ENCODE measurements at regions of chr11 and their contacts with region 1.

Region 1: DNA sequence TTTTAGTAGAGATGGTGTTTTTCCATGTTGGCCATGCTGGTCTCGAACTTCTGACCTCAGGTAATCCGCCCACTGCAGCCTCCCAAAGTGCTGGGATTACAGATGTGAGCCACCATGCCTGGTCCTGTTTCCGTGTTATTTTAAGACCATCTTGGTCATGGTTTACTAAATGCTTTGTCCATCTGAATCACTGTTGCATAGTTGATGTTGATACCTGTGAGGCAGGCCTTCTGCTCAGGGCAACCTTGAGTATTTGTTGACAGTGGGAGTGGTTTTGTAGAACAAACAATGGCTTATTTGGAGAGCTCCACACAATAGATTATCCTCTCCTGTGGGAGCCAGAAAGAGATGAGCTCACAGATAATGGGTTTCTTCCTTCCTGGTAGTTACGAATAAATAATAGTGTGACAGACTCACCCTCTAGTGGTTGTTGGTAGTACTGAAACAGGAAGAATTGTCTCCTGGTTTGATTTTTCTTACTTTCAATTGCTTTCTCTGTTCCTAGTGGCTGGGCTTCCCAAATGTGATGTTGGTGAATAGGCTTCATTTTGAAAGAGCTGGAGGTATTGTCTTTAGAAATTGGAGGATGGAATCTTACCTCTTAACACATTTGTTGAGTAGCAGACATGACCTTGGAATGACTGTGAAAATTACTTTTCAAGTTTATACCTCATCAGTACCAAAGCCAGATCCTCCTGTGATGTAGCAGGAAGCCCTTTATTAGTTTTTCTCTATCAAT is 39.0 kb downstream of the CTNND1 start:
- DNase-seq: peak; percentile 81
- ATAC-seq: peak; percentile 90
- H3K4me3 ChIP-seq: no peak overlapping the region
- H3K4me3 Mint-ChIP-seq: peak overlapping the region; percentile 38
- H3K27ac ChIP-seq: peak overlapping the region; percentile 39 to 90
- H3K27ac Mint-ChIP-seq: peak overlapping the region; percentile 91
- H3K4me1 ChIP-seq: peaks cover 28 to 30% of the 10 kb centered on the region in 2 donors
- H3K4me1 Mint-ChIP-seq: peaks cover 36% of the 10 kb centered on the region
- H3K27me3 ChIP-seq: no peaks in the 10 kb centered on the region
- H3K27me3 Mint-ChIP-seq: no peaks in the 10 kb centered on the region
- CTCF ChIP-seq: peak; percentile 92

Region 2: DNA sequence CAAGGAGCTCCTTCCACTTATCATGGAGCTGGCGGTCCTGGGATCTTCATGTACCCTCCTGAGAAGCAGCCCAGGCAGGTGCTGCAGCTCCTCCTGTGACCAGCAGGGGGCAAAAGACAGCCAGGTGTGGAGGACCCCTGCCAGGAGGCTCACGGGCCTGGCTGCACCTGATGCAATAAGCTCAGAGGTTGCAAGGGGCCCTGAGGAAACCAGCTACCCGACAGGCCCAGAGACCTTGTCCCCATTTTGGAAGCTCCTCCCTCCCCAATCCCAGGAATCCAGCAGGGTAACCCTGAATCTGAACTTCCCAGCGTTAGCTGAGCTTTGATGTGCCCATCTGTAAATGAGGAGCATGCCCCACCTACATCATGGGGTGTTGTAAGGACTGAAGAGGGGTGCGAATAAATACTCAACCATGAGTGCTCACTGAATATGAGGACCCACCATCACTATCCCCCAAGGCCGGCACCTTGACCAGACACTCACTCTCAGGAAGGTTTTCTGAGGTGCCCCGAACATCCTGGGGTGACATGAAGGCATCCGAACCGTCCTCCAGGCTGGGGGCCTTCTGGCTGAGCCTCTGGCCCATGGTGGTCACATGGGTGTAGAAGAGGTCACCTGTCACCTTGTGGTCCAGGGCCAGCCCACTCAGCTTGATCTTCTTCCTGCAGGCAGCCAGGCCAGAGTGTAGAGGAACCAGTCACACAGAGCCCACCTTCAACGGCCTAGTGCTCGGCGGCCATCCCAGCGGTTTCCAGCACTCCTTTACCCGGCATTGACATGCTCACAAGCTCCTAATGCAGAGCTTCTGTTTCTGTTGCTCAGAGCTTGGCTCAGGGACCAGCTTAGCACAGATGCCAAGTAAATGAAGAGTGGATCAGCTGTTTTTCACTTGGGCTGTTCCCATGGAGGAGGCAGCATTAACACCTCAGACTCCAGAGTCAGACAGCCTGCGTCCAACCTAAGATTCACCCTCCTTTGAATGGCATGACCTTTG is 306.8 kb before region 1 on chr11:
- CTCF ChIA-PET with region 1: interaction called, 16 read pairs
- POLR2A ChIA-PET with region 1: no interaction called
- intact Hi-C with region 1: no loop called
- DNase-seq: peak; percentile 77
- ATAC-seq: peak; percentile 96
- H3K4me3 ChIP-seq: no peak overlapping the region
- H3K4me3 Mint-ChIP-seq: no peak overlapping the region
- H3K27ac ChIP-seq: no peak overlapping the region
- H3K27ac Mint-ChIP-seq: no peak overlapping the region
- H3K4me1 ChIP-seq: no peaks in the 10 kb centered on the region
- H3K4me1 Mint-ChIP-seq: peaks cover 2% of the 10 kb centered on the region
- H3K27me3 ChIP-seq: no peaks in the 10 kb centered on the region
- H3K27me3 Mint-ChIP-seq: no peaks in the 10 kb centered on the region
- CTCF ChIP-seq: peak; percentile 97

Region 3: GRCh38 chr11:57644748-57645688 is 155.6 kb before region 1 on chr11:
- CTCF ChIA-PET with region 1: interaction called, 68 read pairs
- POLR2A ChIA-PET with region 1: no interaction called
- intact Hi-C with region 1: no loop called
- DNase-seq: peak; percentile 85
- ATAC-seq: peak; percentile 71
- H3K4me3 ChIP-seq: no peak overlapping the region
- H3K4me3 Mint-ChIP-seq: no peak overlapping the region
- H3K27ac ChIP-seq: no peak overlapping the region
- H3K27ac Mint-ChIP-seq: no peak overlapping the region
- H3K4me1 ChIP-seq: peaks cover 43 to 46% of the 10 kb centered on the region in 2 donors
- H3K4me1 Mint-ChIP-seq: peaks cover 40% of the 10 kb centered on the region
- H3K27me3 ChIP-seq: peaks cover 0 to 58% (median 47%) of the 10 kb centered on the region in 4 experiments
- H3K27me3 Mint-ChIP-seq: peaks cover 70% of the 10 kb centered on the region
- CTCF ChIP-seq: peak; percentile 81

Region 4: DNA sequence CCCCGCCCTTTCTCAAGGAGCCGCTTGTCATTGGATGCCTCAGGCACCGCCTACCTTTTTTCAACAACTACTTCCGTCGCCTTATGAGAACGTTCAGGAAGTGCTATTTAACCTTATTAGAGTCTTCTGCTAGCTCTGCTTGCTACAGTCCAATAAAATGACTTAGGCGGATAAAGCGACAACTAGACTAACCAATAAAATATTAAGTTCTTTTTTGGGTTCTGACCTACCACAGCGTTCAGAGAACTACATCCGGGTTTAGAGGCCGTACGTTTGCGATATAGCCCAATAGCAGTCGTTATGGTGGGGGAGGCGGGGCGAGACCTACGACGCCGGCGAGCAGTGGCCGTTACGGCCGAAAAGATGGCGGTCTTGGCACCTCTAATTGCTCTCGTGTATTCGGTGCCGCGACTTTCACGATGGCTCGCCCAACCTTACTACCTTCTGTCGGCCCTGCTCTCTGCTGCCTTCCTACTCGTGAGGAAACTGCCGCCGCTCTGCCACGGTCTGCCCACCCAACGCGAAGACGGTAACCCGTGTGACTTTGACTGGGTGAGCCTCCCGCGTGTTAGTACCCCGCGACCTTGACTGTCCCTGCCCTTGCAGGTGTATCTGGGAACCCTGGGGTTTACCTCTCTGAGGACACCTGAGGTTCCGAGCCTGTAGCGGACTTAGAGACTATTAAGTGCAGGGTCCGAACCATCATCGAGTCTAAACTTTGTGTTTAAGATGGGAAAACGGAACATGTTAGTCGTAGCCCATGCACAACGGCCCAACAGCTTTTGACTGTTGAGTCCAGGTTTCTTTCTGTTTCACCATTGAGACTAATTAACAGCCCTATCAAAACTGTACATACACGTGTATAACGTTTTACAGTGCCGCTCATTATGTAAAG is 88.1 kb before region 1 on chr11 and contains the start of gene TMX2:
- CTCF ChIA-PET with region 1: interaction called, 43 read pairs
- POLR2A ChIA-PET with region 1: interaction called, 4 read pairs
- intact Hi-C with region 1: loop called (anchors 1 kb)
- DNase-seq: peak; percentile 96
- ATAC-seq: peak; percentile 86
- H3K4me3 ChIP-seq: peak within 1 kb of the TSS; percentile 78 to 100 (median 93)
- H3K4me3 Mint-ChIP-seq: peak within 1 kb of the TSS; percentile 99
- H3K27ac ChIP-seq: peak within 1 kb of the TSS; percentile 70 to 96
- H3K27ac Mint-ChIP-seq: peak within 1 kb of the TSS; percentile 94
- H3K4me1 ChIP-seq: peaks cover 21 to 28% of the 10 kb centered on the region in 2 donors
- H3K4me1 Mint-ChIP-seq: peaks cover 42% of the 10 kb centered on the region
- H3K27me3 ChIP-seq: no peaks in the 10 kb centered on the region
- H3K27me3 Mint-ChIP-seq: no peaks in the 10 kb centered on the region
- CTCF ChIP-seq: no peak
- total RNA-seq, gene TMX2: 58.8 and 60.2 TPM in 2 replicates

Region 5: DNA sequence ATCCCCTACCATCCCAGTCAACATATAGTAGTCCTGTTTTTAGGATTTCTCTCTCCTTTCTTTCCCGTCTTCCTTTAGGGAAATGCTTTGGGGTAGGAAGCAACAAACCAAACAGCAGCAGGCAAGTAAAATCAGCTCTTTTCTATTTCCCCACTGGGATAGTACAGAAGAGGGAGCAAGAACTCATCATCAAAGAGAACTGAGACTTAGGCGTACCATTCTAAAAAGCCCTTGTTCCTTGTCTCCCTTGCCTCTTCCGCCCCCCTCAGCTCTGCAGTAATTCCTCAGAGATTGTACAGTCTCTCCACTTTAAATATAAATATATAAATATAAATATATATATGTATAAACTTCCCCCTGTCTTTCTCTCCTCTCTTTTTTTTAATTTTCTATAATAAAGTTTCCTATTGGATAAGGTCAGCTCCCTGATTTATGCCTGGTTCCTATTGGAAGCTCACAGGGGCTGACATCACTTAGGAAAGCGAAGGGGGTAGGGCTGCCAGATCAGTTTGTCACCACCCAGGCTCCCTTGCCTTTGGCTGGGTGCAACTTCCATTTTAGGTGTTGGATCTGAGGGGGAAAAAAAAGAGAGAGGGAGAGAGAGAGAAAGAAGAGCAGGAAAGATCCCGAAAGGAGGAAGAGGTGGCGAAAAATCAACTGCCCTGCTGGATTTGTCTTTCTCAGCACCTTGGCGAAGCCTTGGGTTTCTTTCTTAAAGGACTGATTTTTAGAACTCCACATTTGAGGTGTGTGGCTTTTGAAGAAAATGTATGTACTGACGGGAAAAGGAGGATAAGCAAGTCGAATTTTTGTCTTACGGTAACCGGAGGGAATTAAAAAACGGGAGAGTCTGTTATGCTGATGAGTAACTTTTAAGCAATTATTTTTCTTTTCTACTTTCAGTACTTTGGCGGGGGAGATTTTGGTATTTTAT is 39.0 kb before region 1 on chr11 and contains the start of gene CTNND1:
- CTCF ChIA-PET with region 1: interaction called, 75 read pairs
- POLR2A ChIA-PET with region 1: no interaction called
- intact Hi-C with region 1: loop called (anchors 1 kb)
- DNase-seq: peak; percentile 65
- ATAC-seq: peak; percentile 75
- H3K4me3 ChIP-seq: peak within 1 kb of the TSS; percentile 46 to 68 (median 64)
- H3K4me3 Mint-ChIP-seq: peak within 1 kb of the TSS; percentile 76
- H3K27ac ChIP-seq: peak within 1 kb of the TSS; percentile 6 to 77
- H3K27ac Mint-ChIP-seq: peak within 1 kb of the TSS; percentile 74
- H3K4me1 ChIP-seq: peaks cover 15 to 19% of the 10 kb centered on the region in 2 donors
- H3K4me1 Mint-ChIP-seq: peaks cover 32% of the 10 kb centered on the region
- H3K27me3 ChIP-seq: no peaks in the 10 kb centered on the region
- H3K27me3 Mint-ChIP-seq: no peaks in the 10 kb centered on the region
- CTCF ChIP-seq: no peak
- total RNA-seq, gene CTNND1: 54.4 and 59.2 TPM in 2 replicates

Region 6: DNA sequence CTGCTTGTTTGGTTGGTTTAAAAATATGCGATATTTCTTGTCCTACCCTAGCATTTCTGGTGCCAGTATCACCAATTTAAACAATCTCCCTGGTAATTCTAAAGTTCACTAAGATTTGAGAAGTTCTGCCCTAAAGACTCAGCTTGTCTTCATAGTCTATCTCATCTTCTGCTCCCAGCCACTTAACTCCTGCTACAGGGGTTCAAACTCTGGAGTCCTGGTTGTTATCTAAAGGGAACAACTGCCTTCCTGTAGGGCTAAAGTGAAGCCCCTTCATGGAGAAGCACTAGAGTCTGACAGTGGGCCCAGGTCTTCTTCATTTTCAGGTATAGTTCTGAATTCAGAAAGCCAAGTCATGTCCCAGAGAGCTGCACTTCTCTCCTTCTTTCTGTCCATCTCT is 34.2 kb after region 1 on chr11:
- CTCF ChIA-PET with region 1: no interaction called
- POLR2A ChIA-PET with region 1: no interaction called
- intact Hi-C with region 1: no loop called
- DNase-seq: no peak
- ATAC-seq: no peak
- H3K4me3 ChIP-seq: no peak overlapping the region
- H3K4me3 Mint-ChIP-seq: no peak overlapping the region
- H3K27ac ChIP-seq: no peak overlapping the region
- H3K27ac Mint-ChIP-seq: no peak overlapping the region
- H3K4me1 ChIP-seq: no peaks in the 10 kb centered on the region
- H3K4me1 Mint-ChIP-seq: no peaks in the 10 kb centered on the region
- H3K27me3 ChIP-seq: peaks cover 0 to 23% (median under 1%) of the 10 kb centered on the region in 4 experiments
- H3K27me3 Mint-ChIP-seq: peaks cover 38% of the 10 kb centered on the region
- CTCF ChIP-seq: no peak

Region 7: DNA sequence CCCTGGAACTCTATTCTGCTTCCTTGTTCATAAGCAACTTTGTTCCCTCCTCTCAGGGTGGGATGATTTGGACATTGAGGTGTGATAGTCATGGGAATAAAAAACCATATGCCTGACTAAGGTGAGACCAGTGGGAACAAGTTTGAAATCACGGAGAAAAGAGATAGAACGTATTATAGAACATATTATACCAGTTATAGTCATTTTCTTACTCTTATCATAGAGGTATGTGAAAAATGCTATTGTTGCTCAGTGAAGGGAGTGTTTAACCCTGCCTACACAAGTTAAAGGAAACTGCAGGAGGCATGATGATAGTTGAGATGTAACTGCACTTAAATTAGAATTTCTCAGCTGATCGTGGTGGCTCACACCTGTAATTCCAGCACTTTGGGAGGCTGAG is 245.6 kb after region 1 on chr11:
- CTCF ChIA-PET with region 1: no interaction called
- POLR2A ChIA-PET with region 1: no interaction called
- intact Hi-C with region 1: no loop called
- DNase-seq: no peak
- ATAC-seq: no peak
- H3K4me3 ChIP-seq: no peak overlapping the region
- H3K4me3 Mint-ChIP-seq: no peak overlapping the region
- H3K27ac ChIP-seq: no peak overlapping the region
- H3K27ac Mint-ChIP-seq: no peak overlapping the region
- H3K4me1 ChIP-seq: no peaks in the 10 kb centered on the region
- H3K4me1 Mint-ChIP-seq: no peaks in the 10 kb centered on the region
- H3K27me3 ChIP-seq: peaks cover 0 to 4% (median 0%) of the 10 kb centered on the region in 4 experiments
- H3K27me3 Mint-ChIP-seq: peaks cover 9% of the 10 kb centered on the region
- CTCF ChIP-seq: no peak

Region 8: DNA sequence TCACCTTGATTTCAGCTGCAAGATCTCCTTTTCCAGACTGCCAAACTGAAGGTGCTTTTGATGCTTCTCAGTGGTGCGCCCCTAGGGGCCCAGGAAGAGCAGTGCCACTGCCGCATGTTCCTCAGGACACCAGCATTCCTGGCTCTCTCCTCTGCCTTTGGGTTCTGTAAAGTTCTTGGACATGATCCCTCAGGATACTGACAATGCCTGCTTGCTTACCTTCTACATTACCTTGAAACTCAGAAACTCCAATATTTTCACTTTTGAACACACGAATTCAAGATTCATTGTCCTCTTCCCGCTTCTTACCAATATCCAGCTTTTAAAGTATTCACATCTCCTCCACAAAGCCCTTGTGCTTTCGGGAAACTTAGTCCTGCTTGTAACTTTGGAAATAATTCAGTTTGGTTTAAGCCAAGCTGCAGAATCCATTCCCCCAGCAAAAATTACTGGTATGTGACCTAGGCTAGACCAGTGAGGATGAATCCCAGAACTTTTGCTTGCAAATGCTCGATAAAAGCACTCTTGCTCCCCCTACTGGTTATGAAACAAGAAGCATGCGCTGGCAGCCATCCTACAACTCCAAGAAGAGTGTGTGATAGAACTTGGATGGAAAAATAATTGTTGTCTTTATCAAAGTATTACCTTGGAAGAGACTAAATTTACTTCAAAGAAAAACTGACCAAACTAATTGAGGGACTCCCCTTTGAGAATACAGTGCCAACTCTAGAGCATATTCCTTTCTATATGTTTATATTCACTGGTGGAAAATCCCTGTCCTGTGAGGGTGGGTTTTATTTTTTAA is 723.8 kb after region 1 on chr11:
- CTCF ChIA-PET with region 1: interaction called, 4 read pairs
- POLR2A ChIA-PET with region 1: no interaction called
- intact Hi-C with region 1: loop called (anchors 5 kb)
- DNase-seq: peak; percentile 79
- ATAC-seq: peak; percentile 31
- H3K4me3 ChIP-seq: peak overlapping the region; percentile 22 to 70 (median 45)
- H3K4me3 Mint-ChIP-seq: peak overlapping the region; percentile 84
- H3K27ac ChIP-seq: peak overlapping the region; percentile 81 to 99
- H3K27ac Mint-ChIP-seq: peak overlapping the region; percentile 93
- H3K4me1 ChIP-seq: peaks cover 28 to 32% of the 10 kb centered on the region in 2 donors
- H3K4me1 Mint-ChIP-seq: peaks cover 29% of the 10 kb centered on the region
- H3K27me3 ChIP-seq: no peaks in the 10 kb centered on the region
- H3K27me3 Mint-ChIP-seq: no peaks in the 10 kb centered on the region
- CTCF ChIP-seq: peak; percentile 86

Measured in B cell (primary cell).